ENCODE measurements at regions of chr15 and their contacts with region 1.

Region 1: GRCh38 chr15:55407949-55408791 is at the starts of genes CCPG1 and PIERCE2:
- DNase-seq: peak; percentile 95
- ATAC-seq: peak; percentile 96
- H3K4me3 Mint-ChIP-seq: peak within 1 kb of the TSS; percentile 90
- H3K27ac Mint-ChIP-seq: peak within 1 kb of the TSS; percentile 86
- H3K4me1 Mint-ChIP-seq: peaks cover 32% of the 10 kb centered on the region
- H3K27me3 Mint-ChIP-seq: no peaks in the 10 kb centered on the region
- total RNA-seq, gene CCPG1: 19.2 to 22.0 TPM
- total RNA-seq, gene PIERCE2: not detected

Region 2: GRCh38 chr15:55318588-55319494 is 89.3 kb before region 1 on chr15 and contains the starts of genes PIGB and PIGBOS1:
- CTCF ChIA-PET with region 1: interaction called, 22 read pairs
- DNase-seq: peak; percentile 90
- ATAC-seq: peak; percentile 94
- H3K4me3 Mint-ChIP-seq: peak within 1 kb of the TSS; percentile 94
- H3K27ac Mint-ChIP-seq: peak within 1 kb of the TSS; percentile 99
- H3K4me1 Mint-ChIP-seq: peaks cover 51% of the 10 kb centered on the region
- H3K27me3 Mint-ChIP-seq: no peaks in the 10 kb centered on the region
- total RNA-seq, gene PIGB: 29.8 to 31.2 TPM
- total RNA-seq, gene PIGBOS1: 13.2 to 14.3 TPM

Region 3: GRCh38 chr15:55588070-55588814 is 180.1 kb after region 1 on chr15 and contains the start of gene PYGO1:
- CTCF ChIA-PET with region 1: no interaction called
- DNase-seq: peak; percentile 46
- ATAC-seq: peak; percentile 61
- H3K4me3 Mint-ChIP-seq: peak within 1 kb of the TSS; percentile 27
- H3K27ac Mint-ChIP-seq: no peak within 1 kb of the TSS
- H3K4me1 Mint-ChIP-seq: peaks cover 2% of the 10 kb centered on the region
- H3K27me3 Mint-ChIP-seq: peaks cover 46% of the 10 kb centered on the region
- total RNA-seq, gene PYGO1: not detected